Pancreas (tissue), 10 donors: ENCODE measurements at regions of chr5 and their contacts with region 1.

Region 1: GRCh38 chr5:172707285-172708182 is 63.5 kb downstream of the DUSP1 start:
- DNase-seq: peak in 1 of 6 donors; percentile 58
- ATAC-seq: peak in 3 of 4 donors; percentile 67 to 72 (median 72)
- H3K4me3 ChIP-seq: no peak overlapping the region
- H3K27ac ChIP-seq: no peak overlapping the region
- H3K4me1 ChIP-seq: no peaks in the 10 kb centered on the region
- H3K27me3 ChIP-seq: no peaks in the 10 kb centered on the region
- CTCF ChIP-seq: peak in 1 of 4 donors; percentile 7

Region 2: DNA sequence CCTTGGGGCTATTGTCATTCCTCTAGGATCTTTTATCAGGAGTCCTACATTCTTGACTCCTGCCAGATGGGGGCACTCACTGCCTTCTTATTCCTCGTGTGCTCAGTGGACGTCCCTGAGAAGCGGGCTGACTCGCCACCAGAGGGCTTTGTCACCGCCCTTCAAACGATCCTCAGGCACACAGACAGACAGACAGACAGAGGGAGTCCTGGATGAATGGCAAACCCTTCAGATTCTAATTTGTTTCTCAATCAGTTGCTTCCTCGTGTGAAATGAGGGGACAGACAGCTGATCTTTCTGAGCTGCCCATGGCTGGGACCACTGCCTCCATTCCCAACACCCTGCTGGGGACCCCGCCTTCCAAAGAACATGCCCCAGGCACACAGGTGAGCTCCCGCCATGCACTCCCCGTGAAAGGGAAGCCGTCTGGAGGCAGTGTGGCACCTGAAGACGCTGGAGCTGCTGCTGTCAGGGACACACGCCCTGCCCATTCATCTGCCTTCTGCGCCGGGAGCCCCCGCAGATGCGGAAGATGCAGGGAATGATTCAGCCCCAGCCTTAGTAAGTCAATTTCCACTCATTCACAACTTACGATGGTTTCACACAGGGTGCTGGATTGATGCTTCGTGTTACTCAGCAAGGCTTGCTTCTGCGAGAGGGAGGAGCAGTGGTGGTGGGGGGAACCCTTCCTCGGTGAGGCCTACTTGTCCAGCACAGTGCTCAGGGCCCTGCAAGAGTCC is 228.3 kb before region 1 on chr5:
- intact Hi-C with region 1: loop called in 1 of 3 experiments (anchors 10 kb)
- DNase-seq: peak; percentile 73 to 89 (median 78)
- ATAC-seq: peak; percentile 98 to 100 (median 99)
- H3K4me3 ChIP-seq: no peak overlapping the region
- H3K27ac ChIP-seq: no peak overlapping the region
- H3K4me1 ChIP-seq: no peaks in the 10 kb centered on the region
- H3K27me3 ChIP-seq: no peaks in the 10 kb centered on the region
- CTCF ChIP-seq: peak; percentile 68 to 86 (median 70)

Region 3: DNA sequence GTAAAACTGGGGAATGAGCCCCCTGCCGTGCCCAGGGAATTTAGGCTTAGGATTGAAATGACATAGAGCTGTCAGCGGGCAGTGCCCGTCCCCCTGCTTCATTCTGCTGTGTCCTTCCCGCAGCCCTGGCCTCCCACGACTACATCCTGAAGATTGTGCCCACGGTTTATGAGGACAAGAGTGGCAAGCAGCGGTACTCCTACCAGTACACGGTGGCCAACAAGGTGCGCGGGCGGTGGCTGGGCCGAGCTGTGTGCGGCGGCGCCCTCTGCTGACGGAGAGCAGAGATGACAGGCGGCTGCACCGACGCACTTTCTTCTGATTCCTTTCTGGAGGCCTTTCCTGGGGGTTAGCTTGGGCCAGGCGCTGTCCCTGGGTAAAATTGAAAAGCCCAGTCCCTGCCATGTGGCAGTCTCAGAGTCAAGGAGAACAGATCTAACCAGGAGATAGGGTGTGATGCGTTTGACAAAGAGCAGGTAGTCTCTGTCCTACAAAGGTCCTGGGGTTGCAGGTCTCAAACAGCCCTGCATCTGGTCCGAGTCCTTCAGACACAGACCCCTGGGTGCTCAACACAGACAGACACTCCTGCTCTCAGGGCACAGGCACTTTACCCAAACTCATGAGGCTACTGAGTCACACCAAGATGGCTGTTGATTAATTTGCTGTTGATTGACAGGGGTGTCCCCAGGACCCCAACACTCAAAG is 224.9 kb after region 1 on chr5:
- intact Hi-C with region 1: loop called (anchors 2 to 10 kb)
- DNase-seq: peak; percentile 54 to 91 (median 81)
- ATAC-seq: peak; percentile 89 to 99 (median 97)
- H3K4me3 ChIP-seq: no peak overlapping the region
- H3K27ac ChIP-seq: no peak overlapping the region
- H3K4me1 ChIP-seq: no peaks in the 10 kb centered on the region
- H3K27me3 ChIP-seq: no peaks in the 10 kb centered on the region
- CTCF ChIP-seq: peak; percentile 91 to 92 (median 92)